H1 (cell line): ENCODE measurements at regions of chr12 and their contacts with region 1.

Region 1: DNA sequence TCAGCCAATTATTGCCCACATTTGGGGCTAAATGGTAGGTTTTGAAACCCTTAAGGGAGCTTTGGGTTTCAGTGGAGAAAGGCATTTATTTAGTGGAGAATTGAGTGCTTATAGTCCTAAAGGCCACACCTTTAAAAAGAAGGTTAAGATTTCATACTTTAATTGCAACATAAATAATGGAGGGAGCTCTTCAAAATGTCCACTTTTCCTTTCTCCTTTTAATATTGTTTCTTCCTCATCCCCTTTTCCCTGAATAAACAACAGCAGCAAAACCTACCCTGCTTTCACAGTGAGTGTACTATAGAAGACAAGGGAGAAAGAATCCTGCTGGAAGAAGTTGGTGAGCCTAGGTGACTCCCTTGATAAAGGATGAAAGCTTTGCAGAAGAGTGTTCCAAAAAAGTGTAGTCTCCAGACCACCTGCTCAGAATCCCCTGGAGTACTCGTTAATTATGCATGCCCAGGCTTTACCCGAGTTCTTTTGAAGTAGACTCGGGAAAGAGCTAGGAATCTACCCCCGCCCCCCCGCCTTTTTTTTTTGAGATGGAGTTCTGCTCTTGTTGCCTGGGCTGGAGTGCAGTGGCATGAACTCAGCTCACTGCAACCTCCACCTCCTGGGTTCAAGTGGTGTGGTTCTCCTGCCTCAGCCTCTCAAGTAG is 11.5 kb upstream of the EID3 start:
- DNase-seq: no peak
- H3K4me3 ChIP-seq: peak overlapping the region in 1 of 4 experiments; percentile 16; a peak in 1 of 8 replicates
- H3K27ac ChIP-seq: no peak overlapping the region
- H3K4me1 ChIP-seq: peaks cover 0 to 7% (median 4%) of the 10 kb centered on the region in 4 experiments; a peak in 4 of 7 replicates
- H3K27me3 ChIP-seq: no peaks in the 10 kb centered on the region
- CTCF ChIP-seq: no peak
- EP300 ChIP-seq: no peak
- POLR2A ChIP-seq: no peak
- RAD21 ChIP-seq: no peak

Region 2: GRCh38 chr12:104215638-104216297 is 76.2 kb before region 1 on chr12 and contains the start of gene TXNRD1:
- CTCF ChIA-PET with region 1: interaction called, 11 read pairs
- POLR2A ChIA-PET with region 1: interaction called, 14 read pairs
- DNase-seq: peak; percentile 64 to 90
- H3K4me3 ChIP-seq: peak within 1 kb of the TSS; percentile 45 to 68 (median 56)
- H3K27ac ChIP-seq: no peak within 1 kb of the TSS
- H3K4me1 ChIP-seq: no peaks in the 10 kb centered on the region
- H3K27me3 ChIP-seq: peaks cover 0 to 12% (median 10%) of the 10 kb centered on the region in 4 experiments; a peak in 6 of 7 replicates
- CTCF ChIP-seq: peak; percentile 75 to 87 (median 80)
- EP300 ChIP-seq: no peak
- POLR2A ChIP-seq: peak; percentile 69 to 74
- RAD21 ChIP-seq: peak; percentile 76 to 85
- total RNA-seq, gene TXNRD1: 120 and 127 TPM in 2 replicates

Region 3: GRCh38 chr12:104303538-104304151 is 11.6 kb after region 1 on chr12 and contains the start of gene EID3:
- CTCF ChIA-PET with region 1: interaction called, 7 read pairs
- POLR2A ChIA-PET with region 1: interaction called, 37 read pairs
- DNase-seq: peak in 1 of 2 experiments; percentile 95
- H3K4me3 ChIP-seq: peak within 1 kb of the TSS; percentile 41 to 59 (median 50)
- H3K27ac ChIP-seq: peak within 1 kb of the TSS; percentile 56
- H3K4me1 ChIP-seq: peaks cover 7 to 15% (median 8%) of the 10 kb centered on the region in 4 experiments
- H3K27me3 ChIP-seq: no peaks in the 10 kb centered on the region; a peak in 1 of 7 replicates
- CTCF ChIP-seq: no peak
- EP300 ChIP-seq: no peak
- POLR2A ChIP-seq: peak in 1 of 2 experiments; percentile 24; a peak in 1 of 3 replicates
- RAD21 ChIP-seq: no peak
- total RNA-seq, gene EID3: 2.2 and 2.8 TPM in 2 replicates

Region 4: DNA sequence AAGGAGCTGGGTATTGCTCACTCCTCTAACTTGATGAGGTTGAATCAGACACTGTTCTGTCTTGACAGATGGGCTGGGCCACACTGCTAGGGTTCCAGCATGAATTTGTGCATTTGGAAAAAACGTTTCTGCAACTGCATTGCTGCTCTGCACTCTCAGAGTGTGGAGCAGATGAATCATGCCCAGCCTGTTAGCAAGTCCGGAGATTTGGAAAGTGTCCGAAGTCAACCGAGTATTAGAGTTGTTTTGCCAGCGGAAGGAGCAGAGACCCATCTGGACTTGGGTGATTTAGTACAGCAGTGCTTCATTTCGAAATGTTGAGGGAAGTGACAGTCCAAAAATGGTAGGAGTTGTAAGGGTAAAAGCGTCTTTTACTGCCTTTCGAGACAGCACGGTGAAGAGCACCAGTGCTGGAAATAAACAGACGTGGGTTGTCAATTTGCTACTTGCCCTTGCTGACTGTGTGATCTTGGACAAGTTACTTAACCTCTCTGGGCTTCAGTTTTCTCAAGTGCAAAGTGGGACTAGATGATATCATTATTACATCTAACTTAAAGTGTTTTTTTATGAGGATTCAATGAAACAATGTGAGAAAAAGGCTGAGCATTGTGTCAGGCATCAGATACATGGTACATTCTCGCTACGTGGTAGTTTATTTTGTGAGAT is 304.3 kb after region 1 on chr12:
- CTCF ChIA-PET with region 1: no interaction called
- POLR2A ChIA-PET with region 1: no interaction called
- DNase-seq: no peak
- H3K4me3 ChIP-seq: no peak overlapping the region
- H3K27ac ChIP-seq: no peak overlapping the region
- H3K4me1 ChIP-seq: peaks cover 0 to 6% (median 4%) of the 10 kb centered on the region in 4 experiments; a peak in 5 of 7 replicates
- H3K27me3 ChIP-seq: no peaks in the 10 kb centered on the region
- CTCF ChIP-seq: no peak
- EP300 ChIP-seq: no peak
- POLR2A ChIP-seq: no peak
- RAD21 ChIP-seq: no peak